WTC11 (cell line): ENCODE measurements at regions of chr3 and their contacts with region 1.

Region 1: GRCh38 chr3:119322835-119323722 is 28.9 kb downstream of the ARHGAP31 start:
- DNase-seq: peak; percentile 80
- ATAC-seq: peak; percentile 71
- H3K4me3 Mint-ChIP-seq: peak overlapping the region; percentile 85
- H3K27ac Mint-ChIP-seq: peak overlapping the region; percentile 98
- H3K4me1 Mint-ChIP-seq: peaks cover 60% of the 10 kb centered on the region
- H3K27me3 Mint-ChIP-seq: no peaks in the 10 kb centered on the region
- CTCF ChIP-seq: no peak

Region 2: GRCh38 chr3:119352849-119353502 is 29.9 kb after region 1 on chr3:
- CTCF ChIA-PET with region 1: interaction called, 6 read pairs
- POLR2A ChIA-PET with region 1: interaction called, 19 read pairs
- DNase-seq: no peak
- ATAC-seq: peak; percentile 10
- H3K4me3 Mint-ChIP-seq: no peak overlapping the region
- H3K27ac Mint-ChIP-seq: 0 out of 2 replicates have a peak overlapping the region, but pooled peaks have one; percentile 48
- H3K4me1 Mint-ChIP-seq: peaks cover 66% of the 10 kb centered on the region
- H3K27me3 Mint-ChIP-seq: no peaks in the 10 kb centered on the region
- CTCF ChIP-seq: no peak